ENCODE measurements at regions of chr20 and their contacts with region 1.

Region 1: GRCh38 chr20:3901028-3901705 is 12.0 kb downstream of the PANK2 start:
- DNase-seq: peak; percentile 37 to 84 (median 76)
- H3K4me3 ChIP-seq: peak overlapping the region; percentile 43 to 81 (median 74)
- H3K4me3 Mint-ChIP-seq: peak overlapping the region; percentile 74 to 87
- H3K27ac ChIP-seq: peak overlapping the region; percentile 83 to 86
- H3K27ac Mint-ChIP-seq: peak overlapping the region; percentile 80 to 96 (median 95)
- H3K4me1 ChIP-seq: peaks cover 81 to 84% of the 10 kb centered on the region in 2 donors
- H3K4me1 Mint-ChIP-seq: peaks cover 90% of the 10 kb centered on the region
- H3K27me3 ChIP-seq: no peaks in the 10 kb centered on the region
- H3K27me3 Mint-ChIP-seq: peaks cover 0 to 4% (median 0%) of the 10 kb centered on the region in 3 donors
- CTCF ChIP-seq: no peak

Region 2: DNA sequence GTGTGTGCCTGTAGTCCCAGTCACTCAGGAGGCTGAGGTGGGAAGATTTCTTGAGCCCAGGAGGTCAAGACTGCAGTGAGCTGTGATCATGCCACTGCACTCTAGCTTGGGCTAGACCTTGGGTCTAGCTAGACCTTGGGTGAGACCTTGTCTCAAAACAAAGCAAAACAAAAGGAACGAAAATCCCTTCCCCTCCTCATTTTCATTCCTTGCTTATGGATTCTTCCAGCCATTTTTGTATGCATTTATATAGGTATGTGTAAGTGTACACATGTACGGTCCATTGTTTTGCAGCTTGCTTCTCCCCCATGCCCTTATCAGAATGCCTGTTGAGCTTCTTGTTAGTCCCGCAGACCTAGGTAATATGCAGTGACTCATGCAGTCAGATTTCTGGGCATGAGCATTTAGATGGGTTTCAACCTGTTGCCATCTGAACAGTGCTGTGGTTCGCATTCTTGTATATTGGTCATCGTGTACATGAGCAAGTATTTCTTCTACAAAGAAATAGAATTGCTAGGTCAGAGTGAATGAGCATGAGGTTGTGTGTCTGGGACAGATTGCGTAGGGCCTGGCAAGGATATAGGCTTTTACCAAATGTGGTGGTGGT is 357.2 kb before region 1 on chr20:
- intact Hi-C with region 1: no loop called
- DNase-seq: no peak
- H3K4me3 ChIP-seq: no peak overlapping the region
- H3K4me3 Mint-ChIP-seq: no peak overlapping the region
- H3K27ac ChIP-seq: no peak overlapping the region
- H3K27ac Mint-ChIP-seq: no peak overlapping the region
- H3K4me1 ChIP-seq: peaks cover 5 to 11% of the 10 kb centered on the region in 2 donors
- H3K4me1 Mint-ChIP-seq: peaks cover 24% of the 10 kb centered on the region
- H3K27me3 ChIP-seq: no peaks in the 10 kb centered on the region
- H3K27me3 Mint-ChIP-seq: no peaks in the 10 kb centered on the region
- CTCF ChIP-seq: no peak

Region 3: GRCh38 chr20:3888622-3889488 is 12.3 kb before region 1 on chr20 and contains the start of gene PANK2:
- intact Hi-C with region 1: loop called in 1 of 2 experiments (anchors 1 kb)
- DNase-seq: peak; percentile 95 to 97 (median 96)
- H3K4me3 ChIP-seq: peak within 1 kb of the TSS; percentile 93 to 96 (median 94)
- H3K4me3 Mint-ChIP-seq: peak within 1 kb of the TSS; percentile 95 to 98
- H3K27ac ChIP-seq: peak within 1 kb of the TSS; percentile 77 to 85
- H3K27ac Mint-ChIP-seq: peak within 1 kb of the TSS; percentile 95 to 98 (median 97)
- H3K4me1 ChIP-seq: peaks cover 44 to 49% of the 10 kb centered on the region in 2 donors
- H3K4me1 Mint-ChIP-seq: peaks cover 50% of the 10 kb centered on the region
- H3K27me3 ChIP-seq: no peaks in the 10 kb centered on the region
- H3K27me3 Mint-ChIP-seq: peaks cover 0 to 2% (median 1%) of the 10 kb centered on the region in 3 donors
- CTCF ChIP-seq: no peak
- polyA plus RNA-seq, gene PANK2: 36.8 to 65.7 (median 48.0) TPM

Region 4: GRCh38 chr20:4091490-4092479 is 190.6 kb after region 1 on chr20:
- intact Hi-C with region 1: loop called in 1 of 2 experiments (anchors 5 kb)
- DNase-seq: peak in 2 of 3 donors; percentile 57 to 65
- H3K4me3 ChIP-seq: no peak overlapping the region
- H3K4me3 Mint-ChIP-seq: no peak overlapping the region
- H3K27ac ChIP-seq: peak overlapping the region in 1 of 2 donors; percentile 83
- H3K27ac Mint-ChIP-seq: peak overlapping the region; percentile 86 to 98 (median 95)
- H3K4me1 ChIP-seq: peaks cover 36 to 37% of the 10 kb centered on the region in 2 donors
- H3K4me1 Mint-ChIP-seq: peaks cover 37% of the 10 kb centered on the region
- H3K27me3 ChIP-seq: no peaks in the 10 kb centered on the region
- H3K27me3 Mint-ChIP-seq: peaks cover 0 to 3% (median 2%) of the 10 kb centered on the region in 3 donors
- CTCF ChIP-seq: peak; percentile 80

Measured in CD14-positive monocyte (primary cell).